RWPE1 (cell line): ENCODE measurements at regions of chr11 and their contacts with region 1.

Region 1: GRCh38 chr11:66462911-66463310 is 3.8 kb upstream of the PELI3 start:
- DNase-seq: no peak
- H3K27ac ChIP-seq: no peak overlapping the region
- CTCF ChIP-seq: no peak

Region 2: GRCh38 chr11:66495401-66495844 is 32.5 kb after region 1 on chr11:
- CTCF ChIA-PET with region 1: no interaction called
- POLR2A ChIA-PET with region 1: no interaction called
- DNase-seq: no peak
- H3K27ac ChIP-seq: no peak overlapping the region; the same call in 1 of the 2 replicates
- CTCF ChIP-seq: no peak

Region 3: GRCh38 chr11:66677599-66678375 is 214.9 kb after region 1 on chr11 and contains the start of gene RBM4B:
- CTCF ChIA-PET with region 1: no interaction called
- POLR2A ChIA-PET with region 1: interaction called, 13 read pairs
- DNase-seq: peak; percentile 95
- H3K27ac ChIP-seq: peak within 1 kb of the TSS; percentile 94
- CTCF ChIP-seq: no peak

Region 4: DNA sequence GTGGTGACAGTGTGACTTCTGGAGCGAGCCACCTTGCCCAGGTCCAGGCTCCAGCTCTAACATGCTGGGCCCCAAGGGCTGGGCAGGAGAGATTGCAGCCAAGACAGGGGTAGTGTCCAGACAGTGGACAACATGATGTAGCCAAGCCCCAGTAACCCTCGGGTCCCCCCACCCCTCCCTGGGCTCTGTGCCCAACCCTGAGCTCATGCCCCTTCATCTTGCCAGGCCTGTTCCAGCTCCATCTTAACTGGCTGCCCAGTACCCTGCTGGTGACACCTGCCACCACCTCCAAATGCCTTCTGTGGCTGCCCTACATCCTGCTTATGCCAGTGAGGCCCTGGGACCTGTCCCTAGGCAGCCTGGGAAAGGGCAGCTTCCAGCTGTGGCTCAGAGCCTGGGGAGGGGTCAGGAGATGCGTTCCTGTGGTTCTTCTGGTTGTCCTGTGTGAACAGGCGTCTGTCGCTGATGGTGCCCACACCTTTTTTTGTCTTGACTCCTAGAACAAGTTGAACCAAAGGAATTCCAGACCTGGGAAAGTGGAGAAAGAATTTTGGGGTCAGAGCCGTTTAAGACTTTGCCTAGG is 547.5 kb after region 1 on chr11:
- CTCF ChIA-PET with region 1: no interaction called
- POLR2A ChIA-PET with region 1: no interaction called
- DNase-seq: no peak
- H3K27ac ChIP-seq: no peak overlapping the region
- CTCF ChIP-seq: no peak